OCI-LY7 (cell line): ENCODE measurements at regions of chr12 and their contacts with region 1.

Region 1: DNA sequence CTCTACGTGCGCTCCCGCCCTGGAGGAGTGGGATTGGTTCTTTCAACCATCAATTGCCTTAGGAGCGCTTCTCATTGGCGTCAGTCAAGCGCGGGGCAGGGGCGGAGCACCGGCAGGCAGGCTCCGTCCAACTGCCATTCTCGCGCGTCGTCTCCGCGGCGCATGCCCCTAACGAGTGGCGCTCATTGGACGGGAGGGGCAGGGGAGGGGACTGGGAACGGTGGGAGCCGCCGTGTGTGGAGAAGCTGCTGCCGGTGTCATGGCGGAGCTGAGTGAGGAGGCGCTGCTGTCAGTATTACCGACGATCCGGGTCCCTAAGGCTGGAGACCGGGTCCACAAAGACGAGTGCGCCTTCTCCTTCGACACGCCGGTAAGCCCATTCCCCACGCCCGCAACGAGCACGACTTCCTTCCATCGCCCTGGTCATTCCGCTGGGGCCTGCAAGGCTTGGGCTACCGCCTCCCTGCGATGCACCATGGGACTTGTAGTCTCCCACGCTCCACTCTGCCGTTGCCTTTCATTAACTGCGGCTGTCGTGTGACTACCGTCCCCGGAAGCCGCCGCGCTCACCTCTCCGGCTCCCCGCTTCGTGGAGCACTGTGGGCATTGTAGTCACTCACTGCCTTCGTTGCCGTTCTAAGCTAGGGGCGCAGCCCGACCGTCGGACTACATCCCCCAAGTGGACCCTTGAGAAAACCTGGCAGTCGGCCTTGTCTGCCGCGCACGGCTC is at the start of gene USP5:
- DNase-seq: peak; percentile 100
- H3K4me3 ChIP-seq: peak within 1 kb of the TSS; percentile 93
- H3K27ac ChIP-seq: peak within 1 kb of the TSS; percentile 86
- H3K4me1 ChIP-seq: peaks cover 35% of the 10 kb centered on the region
- CTCF ChIP-seq: no peak
- total RNA-seq, gene USP5: 65.9 and 70.4 TPM in 2 replicates

Region 2: DNA sequence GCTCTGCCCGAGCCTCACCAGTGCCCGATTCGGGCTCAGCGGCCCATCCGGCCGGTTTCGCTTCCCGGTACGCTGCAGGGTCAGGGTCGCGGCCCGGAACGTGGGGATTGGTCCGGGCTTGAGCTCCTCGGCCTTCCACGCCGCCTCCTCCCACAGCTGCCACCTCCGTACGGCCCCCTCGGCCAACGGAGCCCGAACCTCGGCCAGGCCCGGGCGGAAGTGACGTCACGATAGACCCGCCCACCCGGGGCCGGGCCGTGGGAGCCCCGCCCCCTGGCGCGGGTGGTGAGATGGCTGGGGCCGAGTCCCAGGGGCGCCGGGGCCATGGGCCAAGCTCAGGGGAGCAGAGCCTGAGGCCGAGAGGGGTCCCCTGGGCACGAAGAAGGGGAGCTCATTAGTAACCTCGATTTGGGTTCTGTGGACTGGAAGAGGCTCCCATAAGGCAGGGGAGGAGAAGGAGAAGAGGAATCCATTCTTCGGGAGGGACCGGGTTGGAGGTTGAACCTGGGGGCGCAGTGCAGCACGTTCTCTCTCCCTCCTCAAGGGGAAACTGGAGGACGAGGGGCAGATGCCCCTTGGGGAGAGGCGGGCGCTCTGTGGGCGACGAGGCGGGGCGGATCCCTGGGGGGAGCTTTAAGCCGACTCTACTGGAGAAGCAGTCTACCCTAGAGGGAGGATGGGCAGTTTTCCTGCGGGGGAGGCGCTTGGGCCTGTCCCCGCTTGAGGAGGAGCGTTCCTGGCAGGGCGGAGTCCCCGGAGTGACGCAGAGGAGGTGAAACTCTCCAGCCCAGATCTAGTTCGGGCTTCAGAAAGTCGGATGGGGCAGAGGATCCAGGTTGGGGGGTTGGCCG is 98.9 kb before region 1 on chr12 and contains the start of gene MLF2:
- CTCF ChIA-PET with region 1: interaction called, 3 read pairs
- POLR2A ChIA-PET with region 1: interaction called, 18 read pairs
- intact Hi-C with region 1: no loop called
- DNase-seq: peak; percentile 97
- H3K4me3 ChIP-seq: peak within 1 kb of the TSS; percentile 89
- H3K27ac ChIP-seq: peak within 1 kb of the TSS; percentile 73
- H3K4me1 ChIP-seq: peaks cover 17% of the 10 kb centered on the region
- CTCF ChIP-seq: no peak
- total RNA-seq, gene MLF2: 87.3 and 96.2 TPM in 2 replicates

Region 3: GRCh38 chr12:6839482-6840201 is 12.4 kb before region 1 on chr12:
- CTCF ChIA-PET with region 1: interaction called, 14 read pairs
- POLR2A ChIA-PET with region 1: interaction called, 101 read pairs
- intact Hi-C with region 1: no loop called
- DNase-seq: peak; percentile 97
- H3K4me3 ChIP-seq: peak overlapping the region; percentile 57
- H3K27ac ChIP-seq: peak overlapping the region; percentile 92
- H3K4me1 ChIP-seq: peaks cover 55% of the 10 kb centered on the region
- CTCF ChIP-seq: no peak

Region 4: DNA sequence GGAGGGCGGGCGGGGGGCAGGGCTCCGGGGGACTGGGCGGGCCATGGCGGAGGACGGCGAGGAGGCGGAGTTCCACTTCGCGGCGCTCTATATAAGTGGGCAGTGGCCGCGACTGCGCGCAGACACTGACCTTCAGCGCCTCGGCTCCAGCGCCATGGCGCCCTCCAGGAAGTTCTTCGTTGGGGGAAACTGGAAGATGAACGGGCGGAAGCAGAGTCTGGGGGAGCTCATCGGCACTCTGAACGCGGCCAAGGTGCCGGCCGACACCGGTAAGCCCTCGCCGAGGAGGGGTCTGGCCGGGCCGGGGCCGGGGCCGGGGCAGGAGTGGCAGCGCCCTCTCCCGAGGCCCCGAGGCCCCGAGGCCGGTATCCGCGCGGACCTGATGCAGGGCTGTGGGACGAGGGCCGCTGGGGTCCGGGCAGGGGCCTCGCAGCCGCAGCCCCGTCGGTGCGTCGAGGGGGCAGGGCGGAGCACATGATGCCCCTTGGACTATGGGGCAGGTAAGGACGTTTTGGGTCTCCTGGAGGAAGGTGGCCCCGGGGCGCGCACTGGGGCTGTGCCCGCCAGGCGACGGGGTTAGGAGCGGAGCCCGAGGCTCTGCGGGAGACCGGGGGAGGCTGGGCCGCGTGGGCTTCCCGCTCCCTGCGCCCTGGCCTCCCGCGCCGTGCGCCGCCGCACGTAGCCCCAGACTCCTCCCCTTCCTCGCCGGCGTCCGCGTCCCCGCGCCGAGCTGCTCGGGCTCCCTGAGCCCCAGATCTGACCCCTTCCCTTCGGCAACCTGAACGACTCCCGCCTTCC is 15.5 kb after region 1 on chr12 and contains the start of gene TPI1:
- CTCF ChIA-PET with region 1: interaction called, 9 read pairs
- POLR2A ChIA-PET with region 1: interaction called, 60 read pairs
- intact Hi-C with region 1: loop called (anchors 1 kb)
- DNase-seq: peak; percentile 79
- H3K4me3 ChIP-seq: peak within 1 kb of the TSS; percentile 93
- H3K27ac ChIP-seq: peak within 1 kb of the TSS; percentile 66
- H3K4me1 ChIP-seq: peaks cover 51% of the 10 kb centered on the region
- CTCF ChIP-seq: no peak
- total RNA-seq, gene TPI1: 596 and 608 TPM in 2 replicates

Region 5: GRCh38 chr12:6890789-6891645 is 38.9 kb after region 1 on chr12:
- CTCF ChIA-PET with region 1: no interaction called
- POLR2A ChIA-PET with region 1: interaction called, 8 read pairs
- intact Hi-C with region 1: loop called (anchors 1 kb)
- DNase-seq: peak; percentile 98
- H3K4me3 ChIP-seq: peak overlapping the region; percentile 66
- H3K27ac ChIP-seq: peak overlapping the region; percentile 81
- H3K4me1 ChIP-seq: peaks cover 28% of the 10 kb centered on the region
- CTCF ChIP-seq: peak; percentile 82

Region 6: DNA sequence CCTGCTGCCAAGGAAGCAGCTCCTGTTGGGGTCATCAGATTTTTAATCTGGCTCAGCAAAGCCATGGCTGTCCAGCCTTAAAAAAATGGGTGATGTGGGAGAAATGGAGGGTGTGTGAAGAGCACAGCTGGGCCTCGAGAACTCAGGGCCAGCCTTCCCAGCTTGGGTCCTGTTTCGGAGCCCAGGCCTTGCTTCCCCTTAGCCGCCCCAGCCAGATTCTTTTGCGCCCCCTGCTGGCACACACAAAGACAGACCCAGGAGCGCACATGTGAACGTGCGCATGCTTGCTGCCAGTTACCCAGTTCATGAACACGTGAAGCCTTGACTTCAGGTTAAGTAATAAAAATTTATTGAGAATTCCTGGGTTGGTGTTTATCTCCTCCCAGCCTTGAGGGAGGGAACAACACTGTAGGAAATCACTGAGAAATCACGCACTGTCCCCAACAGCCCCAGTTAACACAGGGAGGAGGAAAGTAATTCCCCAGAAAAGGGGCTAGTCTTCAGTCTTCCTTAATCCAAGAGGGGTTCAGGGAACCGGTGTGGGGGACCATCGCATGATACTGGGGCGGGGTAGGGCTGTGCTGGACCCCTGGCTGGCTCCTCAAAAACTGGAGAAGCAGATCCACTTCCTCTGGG is 113.1 kb after region 1 on chr12:
- CTCF ChIA-PET with region 1: no interaction called
- POLR2A ChIA-PET with region 1: interaction called, 7 read pairs
- intact Hi-C with region 1: loop called (anchors 5 kb)
- DNase-seq: peak; percentile 86
- H3K4me3 ChIP-seq: no peak overlapping the region
- H3K27ac ChIP-seq: peak overlapping the region; percentile 64
- H3K4me1 ChIP-seq: peaks cover 69% of the 10 kb centered on the region
- CTCF ChIP-seq: peak; percentile 98